Adrenal gland (tissue), 19 donors: ENCODE measurements at regions of chr1 and their contacts with region 1.

Region 1: DNA sequence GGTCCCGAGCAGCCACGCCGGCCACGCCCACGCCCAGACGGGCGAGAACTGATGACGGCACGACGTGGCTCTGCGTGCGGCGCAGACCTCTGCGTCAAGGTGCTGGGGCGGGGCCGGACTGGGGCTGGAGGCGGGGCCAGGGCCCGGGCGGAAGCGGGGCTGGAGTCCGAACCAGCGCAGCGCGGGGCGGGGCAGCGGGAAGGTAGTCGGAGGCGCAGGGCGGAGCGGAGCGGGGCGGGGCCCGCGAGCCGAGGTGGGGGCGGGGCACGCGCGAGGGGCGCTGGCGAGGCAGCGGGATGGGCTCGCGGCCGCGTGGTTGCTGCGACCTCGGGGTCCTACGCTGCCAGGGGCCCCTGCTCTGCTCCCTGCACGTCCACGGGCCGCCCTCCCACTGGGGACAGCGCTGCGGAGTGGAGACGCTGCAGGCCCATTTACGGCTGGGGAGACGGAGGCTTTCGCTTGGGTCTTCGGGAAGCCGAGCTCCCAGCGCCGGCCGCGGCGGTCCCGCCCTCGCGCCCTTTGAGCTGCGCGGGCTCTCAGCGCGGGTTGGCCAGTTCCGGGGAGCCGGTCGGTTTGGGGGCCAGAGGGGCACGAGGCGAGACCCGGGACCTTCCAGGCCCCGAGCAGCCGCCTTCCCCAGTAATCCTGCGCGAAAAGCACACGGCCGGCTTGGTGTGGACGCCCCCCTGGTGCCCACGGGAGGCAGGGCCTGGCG is at the start of gene PEX10:
- DNase-seq: peak; percentile 96 to 98 (median 98)
- H3K4me3 ChIP-seq: peak within 1 kb of the TSS; percentile 51 to 98 (median 73)
- H3K27ac ChIP-seq: peak within 1 kb of the TSS in 4 of 5 donors; percentile 71 to 94 (median 76)
- H3K4me1 ChIP-seq: peaks cover 24 to 42% of the 10 kb centered on the region in 2 donors
- H3K27me3 ChIP-seq: peaks cover 14% of the 10 kb centered on the region
- CTCF ChIP-seq: no peak
- POLR2A ChIP-seq: peak; percentile 13 to 61
- total RNA-seq, gene PEX10: 32.4 to 81.5 (median 45.6) TPM

Region 2: GRCh38 chr1:2468041-2468472 is 55.4 kb after region 1 on chr1:
- intact Hi-C with region 1: no loop called
- DNase-seq: peak in 5 of 7 donors; percentile 37 to 51 (median 39)
- H3K4me3 ChIP-seq: no peak overlapping the region
- H3K27ac ChIP-seq: no peak overlapping the region
- H3K4me1 ChIP-seq: peaks cover 0 to 6% of the 10 kb centered on the region in 2 donors
- H3K27me3 ChIP-seq: peaks cover 44% of the 10 kb centered on the region
- CTCF ChIP-seq: no peak
- POLR2A ChIP-seq: no peak

Region 3: GRCh38 chr1:2545759-2546514 is 133.3 kb after region 1 on chr1:
- intact Hi-C with region 1: loop called (anchors 5 kb)
- DNase-seq: peak; percentile 93 to 97 (median 94)
- H3K4me3 ChIP-seq: peak overlapping the region in 2 of 4 donors; percentile 32 to 62
- H3K27ac ChIP-seq: peak overlapping the region; percentile 24 to 98 (median 92)
- H3K4me1 ChIP-seq: peaks cover 41 to 50% of the 10 kb centered on the region in 2 donors
- H3K27me3 ChIP-seq: no peaks in the 10 kb centered on the region
- CTCF ChIP-seq: no peak
- POLR2A ChIP-seq: peak in 1 of 2 donors; percentile 38

Region 4: DNA sequence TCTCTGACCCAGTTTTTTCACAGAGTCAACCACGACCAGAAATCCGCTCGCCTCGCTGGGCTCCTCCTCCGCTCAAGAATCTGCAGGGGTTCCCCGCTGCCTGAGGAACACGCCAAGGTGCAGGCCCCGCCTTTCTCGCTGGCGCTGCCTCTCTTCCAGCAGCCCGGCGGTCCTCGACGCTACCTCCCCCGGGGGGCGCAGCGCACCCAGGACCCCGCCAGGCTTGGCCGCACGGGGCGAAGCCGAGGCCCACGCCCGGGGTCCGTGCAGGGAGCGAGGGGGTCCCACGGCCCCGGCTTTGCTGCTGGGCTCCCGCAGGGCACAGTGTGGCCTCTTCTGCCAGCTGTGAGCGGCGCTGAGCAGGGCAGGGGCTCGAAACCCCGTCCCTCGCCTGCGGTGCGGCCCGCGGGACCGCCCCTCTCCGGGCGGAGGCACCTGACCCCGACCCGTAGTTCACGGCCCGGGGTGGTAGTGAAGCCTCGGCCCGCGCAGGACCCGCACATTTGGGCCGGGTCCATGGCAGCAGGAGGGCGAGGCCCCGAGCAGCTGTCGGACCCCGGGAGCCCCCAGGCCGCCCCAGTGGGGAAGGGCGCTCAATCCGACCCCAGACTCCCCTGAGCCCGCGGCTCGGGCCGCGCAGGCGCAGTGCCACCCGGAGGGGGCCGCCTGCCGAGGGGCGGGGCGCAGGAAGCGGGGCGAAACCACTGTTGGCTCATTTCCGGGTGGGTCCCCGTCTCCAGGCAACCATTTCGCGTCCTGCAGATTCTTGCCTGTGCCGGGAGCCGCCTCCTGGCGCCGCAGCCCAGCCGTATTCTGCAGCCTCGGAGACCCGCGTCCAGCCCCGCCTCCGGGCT is 230.1 kb after region 1 on chr1:
- intact Hi-C with region 1: loop called in 1 of 2 experiments (anchors 10 kb)
- DNase-seq: peak; percentile 91 to 97 (median 93)
- H3K4me3 ChIP-seq: peak overlapping the region; percentile 53 to 77 (median 64)
- H3K27ac ChIP-seq: peak overlapping the region in 4 of 5 donors; percentile 36 to 78 (median 72)
- H3K4me1 ChIP-seq: peaks cover 14 to 15% of the 10 kb centered on the region in 2 donors
- H3K27me3 ChIP-seq: no peaks in the 10 kb centered on the region
- CTCF ChIP-seq: peak in 3 of 6 experiments; percentile 12 to 22 (median 13)
- POLR2A ChIP-seq: peak in 1 of 2 donors; percentile 70

Region 5: DNA sequence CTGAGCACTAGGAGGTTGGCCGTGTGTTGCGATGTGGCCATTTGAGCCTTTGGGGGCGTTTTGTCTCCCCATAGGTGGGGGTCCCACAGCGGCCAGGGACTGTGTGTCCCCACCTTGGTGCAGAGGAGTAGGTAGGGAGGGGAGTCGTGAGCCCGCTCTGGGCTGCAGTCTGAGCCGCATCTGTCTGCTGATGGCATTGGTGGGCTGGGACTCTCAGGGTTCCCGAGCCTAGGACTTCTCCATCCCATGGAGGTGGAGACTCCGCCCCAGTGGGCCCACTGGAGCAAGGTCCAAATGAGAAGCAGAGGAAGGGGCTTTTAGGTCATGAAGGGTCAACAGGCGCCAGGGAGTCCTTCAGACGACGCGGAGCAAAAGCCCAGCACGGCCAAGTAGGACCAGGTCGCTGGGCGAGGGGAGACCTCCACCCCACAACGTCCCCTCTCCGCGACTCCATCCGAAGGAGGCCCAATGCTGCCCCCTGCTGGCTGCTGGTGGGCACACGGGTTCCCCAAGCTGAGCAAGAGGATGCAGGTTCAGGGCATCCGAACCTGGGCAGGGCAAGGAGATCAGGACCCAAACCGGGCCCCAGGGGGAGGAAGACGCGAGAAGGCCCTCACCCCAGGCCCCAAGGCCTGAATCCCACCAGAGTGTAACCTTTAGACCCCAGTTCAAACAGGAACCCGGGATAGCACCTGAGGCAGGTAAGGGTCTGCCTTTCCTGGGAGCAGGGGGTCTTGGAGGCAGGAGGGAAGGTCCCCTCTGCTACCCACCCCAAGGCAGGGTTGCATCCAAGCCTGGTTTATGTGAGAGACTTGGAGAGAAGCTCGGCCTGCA is 373.9 kb after region 1 on chr1:
- intact Hi-C with region 1: loop called in 1 of 2 experiments (anchors 2 kb)
- DNase-seq: peak in 5 of 7 donors; percentile 42 to 68 (median 47)
- H3K4me3 ChIP-seq: no peak overlapping the region
- H3K27ac ChIP-seq: no peak overlapping the region
- H3K4me1 ChIP-seq: no peaks in the 10 kb centered on the region
- H3K27me3 ChIP-seq: peaks cover 34% of the 10 kb centered on the region
- CTCF ChIP-seq: peak; percentile 47 to 68 (median 60)
- POLR2A ChIP-seq: no peak